PC-9 (cell line): ENCODE measurements at regions of chr10 and their contacts with region 1.

Region 1: DNA sequence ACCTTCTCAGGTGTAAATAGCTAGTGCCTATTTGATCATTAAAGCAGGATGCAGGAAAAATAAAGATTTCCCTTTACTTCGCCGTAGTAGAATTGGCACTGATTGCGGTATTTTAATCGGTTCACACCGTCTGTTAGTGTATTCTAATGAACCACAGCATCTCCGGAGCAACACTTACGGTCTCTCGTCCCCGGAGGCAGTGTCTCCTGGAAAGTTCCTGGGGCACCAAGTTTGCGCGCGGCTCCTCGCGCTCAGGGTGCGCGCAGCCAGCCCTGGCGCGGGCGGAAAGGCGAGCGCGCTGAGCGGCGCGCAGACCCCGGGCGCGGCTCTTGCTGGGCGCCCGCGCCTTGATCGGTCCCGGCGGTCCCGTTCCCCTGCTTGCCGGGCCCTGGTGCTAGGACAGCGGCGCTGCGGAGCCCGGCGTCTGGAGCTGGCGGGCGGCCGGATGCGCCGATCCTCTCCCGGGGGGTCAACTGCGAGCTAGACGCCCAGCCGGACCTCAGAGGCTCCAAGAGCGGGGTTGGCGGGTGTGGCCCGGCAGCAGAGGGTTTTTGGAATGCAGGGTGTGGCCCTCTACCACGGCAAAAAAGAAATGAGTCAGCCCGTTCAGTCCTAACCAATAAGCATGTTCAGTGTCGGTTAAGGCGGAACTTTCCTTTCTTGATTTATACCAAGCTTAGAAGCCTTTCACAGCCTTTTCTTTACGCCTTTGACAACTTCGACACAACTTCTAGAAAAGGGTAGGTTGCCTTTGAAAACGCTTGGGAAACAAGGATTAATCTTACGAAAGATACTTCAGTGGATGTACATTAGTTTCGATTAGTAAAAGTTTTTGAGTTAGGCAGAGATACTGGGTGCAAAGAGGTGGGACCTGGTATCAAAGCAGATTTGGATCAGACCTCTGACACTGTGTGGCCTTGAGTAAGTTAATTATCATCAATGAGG is 166.8 kb upstream of the ASAH2 start:
- DNase-seq: peak; percentile 89 to 94
- H3K4me3 ChIP-seq: peak overlapping the region; percentile 96
- H3K27ac ChIP-seq: peak overlapping the region; percentile 92
- H3K4me1 ChIP-seq: peaks cover 53% of the 10 kb centered on the region
- H3K27me3 ChIP-seq: no peaks in the 10 kb centered on the region
- CTCF ChIP-seq: no peak

Region 2: DNA sequence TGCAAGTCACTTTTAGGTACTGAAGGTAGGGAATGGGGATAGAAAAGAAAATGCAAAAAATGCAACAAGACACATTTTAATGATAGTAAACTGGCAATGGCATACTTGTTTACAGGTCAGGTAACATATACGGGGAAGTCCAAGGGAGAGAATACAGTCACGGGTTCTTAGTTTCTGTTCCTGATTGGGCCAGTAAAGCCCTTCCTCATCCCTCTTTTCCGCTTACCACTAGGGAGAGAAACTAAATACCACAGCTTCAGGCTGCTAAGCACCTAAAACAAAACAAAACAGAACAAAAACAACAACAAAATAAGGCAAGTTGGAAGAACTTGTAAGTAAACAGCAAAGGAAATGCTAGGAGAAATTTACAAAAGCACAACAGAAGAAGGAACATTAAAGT is 590.9 kb before region 1 on chr10:
- CTCF ChIA-PET with region 1: no interaction called
- POLR2A ChIA-PET with region 1: no interaction called
- intact Hi-C with region 1: no loop called
- DNase-seq: no peak
- H3K4me3 ChIP-seq: no peak overlapping the region
- H3K27ac ChIP-seq: no peak overlapping the region
- H3K4me1 ChIP-seq: no peaks in the 10 kb centered on the region
- H3K27me3 ChIP-seq: no peaks in the 10 kb centered on the region
- CTCF ChIP-seq: no peak

Region 3: GRCh38 chr10:50275650-50276235 is 142.4 kb before region 1 on chr10:
- CTCF ChIA-PET with region 1: no interaction called
- POLR2A ChIA-PET with region 1: no interaction called
- intact Hi-C with region 1: loop called (anchors 5 kb)
- DNase-seq: peak; percentile 31 to 38
- H3K4me3 ChIP-seq: no peak overlapping the region
- H3K27ac ChIP-seq: no peak overlapping the region
- H3K4me1 ChIP-seq: peaks cover 11% of the 10 kb centered on the region; the same call in 1 of the 2 replicates
- H3K27me3 ChIP-seq: no peaks in the 10 kb centered on the region
- CTCF ChIP-seq: peak; percentile 75

Region 4: GRCh38 chr10:50367732-50368131 is 50.4 kb before region 1 on chr10:
- CTCF ChIA-PET with region 1: interaction called, 14 read pairs
- POLR2A ChIA-PET with region 1: no interaction called
- intact Hi-C with region 1: no loop called
- DNase-seq: peak in 1 of 2 experiments; percentile 24
- H3K4me3 ChIP-seq: no peak overlapping the region
- H3K27ac ChIP-seq: no peak overlapping the region
- H3K4me1 ChIP-seq: peaks cover 17% of the 10 kb centered on the region
- H3K27me3 ChIP-seq: no peaks in the 10 kb centered on the region
- CTCF ChIP-seq: peak; percentile 61

Region 5: GRCh38 chr10:50375051-50375452 is 43.1 kb before region 1 on chr10:
- CTCF ChIA-PET with region 1: no interaction called
- POLR2A ChIA-PET with region 1: no interaction called
- intact Hi-C with region 1: loop called (anchors 1 kb)
- DNase-seq: peak; percentile 51 to 98
- H3K4me3 ChIP-seq: no peak overlapping the region
- H3K27ac ChIP-seq: peak overlapping the region; percentile 85
- H3K4me1 ChIP-seq: peaks cover 37% of the 10 kb centered on the region
- H3K27me3 ChIP-seq: no peaks in the 10 kb centered on the region
- CTCF ChIP-seq: no peak

Region 6: GRCh38 chr10:50511492-50512213 is 93.5 kb after region 1 on chr10:
- CTCF ChIA-PET with region 1: no interaction called
- POLR2A ChIA-PET with region 1: no interaction called
- intact Hi-C with region 1: loop called (anchors 5 kb)
- DNase-seq: peak; percentile 43 to 98
- H3K4me3 ChIP-seq: no peak overlapping the region
- H3K27ac ChIP-seq: peak overlapping the region; percentile 95
- H3K4me1 ChIP-seq: peaks cover 46% of the 10 kb centered on the region
- H3K27me3 ChIP-seq: no peaks in the 10 kb centered on the region
- CTCF ChIP-seq: no peak

Region 7: DNA sequence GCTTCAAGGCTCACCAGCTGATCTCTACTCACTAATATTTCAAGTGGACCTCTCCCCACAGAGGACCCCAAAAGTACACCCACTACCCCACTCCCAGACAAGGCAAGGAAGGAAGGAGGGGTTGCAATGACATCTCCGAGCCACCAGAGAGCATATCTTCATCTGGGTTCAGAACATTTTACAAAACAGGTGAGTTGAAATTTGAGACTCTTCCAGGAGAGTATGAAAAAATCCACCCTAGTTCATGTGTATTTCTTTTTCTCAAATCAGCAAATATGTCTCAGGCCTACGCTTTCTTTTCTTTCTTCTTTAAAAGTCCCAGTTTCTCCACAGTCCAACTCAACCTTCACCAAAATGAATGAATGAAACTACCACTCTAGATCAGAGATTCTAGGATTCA is 143.7 kb after region 1 on chr10:
- CTCF ChIA-PET with region 1: no interaction called
- POLR2A ChIA-PET with region 1: no interaction called
- intact Hi-C with region 1: loop called (anchors 5 kb)
- DNase-seq: peak in 1 of 2 experiments; percentile 55
- H3K4me3 ChIP-seq: no peak overlapping the region
- H3K27ac ChIP-seq: no peak overlapping the region
- H3K4me1 ChIP-seq: peaks cover 15% of the 10 kb centered on the region
- H3K27me3 ChIP-seq: no peaks in the 10 kb centered on the region
- CTCF ChIP-seq: peak; percentile 84

Region 8: GRCh38 chr10:50577681-50578350 is 159.7 kb after region 1 on chr10:
- CTCF ChIA-PET with region 1: no interaction called
- POLR2A ChIA-PET with region 1: no interaction called
- intact Hi-C with region 1: no loop called
- DNase-seq: peak in 1 of 2 experiments; percentile 27
- H3K4me3 ChIP-seq: no peak overlapping the region
- H3K27ac ChIP-seq: no peak overlapping the region
- H3K4me1 ChIP-seq: peaks cover 81% of the 10 kb centered on the region
- H3K27me3 ChIP-seq: no peaks in the 10 kb centered on the region
- CTCF ChIP-seq: no peak